ENCODE measurements at regions of chr3 and their contacts with region 1.

Region 1: GRCh38 chr3:111539351-111540331 is 2.4 kb upstream of the CD96 start:
- DNase-seq: peak; percentile 51 to 67 (median 58)
- H3K4me3 ChIP-seq: peak overlapping the region; percentile 46 to 63
- H3K4me3 Mint-ChIP-seq: peak overlapping the region; percentile 65 to 87 (median 84)
- H3K27ac ChIP-seq: peak overlapping the region; percentile 33
- H3K27ac Mint-ChIP-seq: peak overlapping the region in 6 of 7 donors; percentile 51 to 96 (median 86)
- H3K4me1 ChIP-seq: peaks cover 51% of the 10 kb centered on the region
- H3K4me1 Mint-ChIP-seq: peaks cover 8 to 68% (median 41%) of the 10 kb centered on the region in 4 donors
- H3K27me3 ChIP-seq: no peaks in the 10 kb centered on the region
- H3K27me3 Mint-ChIP-seq: no peaks in the 10 kb centered on the region

Region 2: GRCh38 chr3:110314512-110315114 is 1225.0 kb before region 1 on chr3:
- CTCF ChIA-PET with region 1: interaction called, 21 read pairs
- POLR2A ChIA-PET with region 1: no interaction called
- intact Hi-C with region 1: loop called (anchors 1 kb)
- DNase-seq: peak; percentile 55 to 67 (median 63)
- H3K4me3 ChIP-seq: no peak overlapping the region
- H3K4me3 Mint-ChIP-seq: peak overlapping the region in 1 of 8 donors; percentile 0
- H3K27ac ChIP-seq: no peak overlapping the region
- H3K27ac Mint-ChIP-seq: no peak overlapping the region
- H3K4me1 ChIP-seq: no peaks in the 10 kb centered on the region
- H3K4me1 Mint-ChIP-seq: peaks cover 0 to 7% (median 4%) of the 10 kb centered on the region in 4 donors
- H3K27me3 ChIP-seq: no peaks in the 10 kb centered on the region
- H3K27me3 Mint-ChIP-seq: peaks cover 0 to under 1% of the 10 kb centered on the region in 2 donors

Region 3: DNA sequence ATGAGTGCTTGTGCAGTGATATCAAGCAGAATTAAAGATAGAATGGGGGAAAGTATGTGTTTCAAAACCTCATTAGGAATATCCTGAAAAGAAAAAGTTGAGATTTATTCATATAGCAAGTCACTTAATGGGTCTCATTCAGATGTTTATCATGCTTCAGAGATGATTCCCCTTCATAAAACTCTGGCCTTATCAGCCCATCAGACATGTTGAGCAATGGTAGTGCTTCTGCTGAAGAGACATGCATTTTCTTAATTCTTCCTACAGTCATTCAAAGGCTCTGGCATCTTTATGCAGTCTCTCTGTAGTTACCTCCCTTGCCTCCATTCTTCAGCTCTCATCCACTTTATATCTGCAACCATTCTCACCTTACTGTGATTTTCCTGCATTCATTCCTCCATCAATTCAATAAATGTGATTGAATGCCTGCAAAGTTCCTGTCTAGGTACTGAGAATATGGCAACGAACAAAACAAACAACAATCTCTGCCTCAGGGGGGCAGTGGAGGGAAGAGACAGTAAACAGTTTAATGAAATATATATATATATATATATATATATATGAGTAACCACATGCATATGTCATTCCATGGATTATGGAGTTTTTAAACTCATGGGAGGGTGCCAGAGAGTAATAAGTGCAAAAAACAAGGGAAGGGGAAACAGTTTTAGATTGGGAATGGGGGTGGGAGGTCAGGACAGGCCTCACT is 329.5 kb before region 1 on chr3:
- CTCF ChIA-PET with region 1: interaction called, 4 read pairs
- POLR2A ChIA-PET with region 1: no interaction called
- intact Hi-C with region 1: loop called (anchors 5 kb)
- DNase-seq: no peak
- H3K4me3 ChIP-seq: no peak overlapping the region
- H3K4me3 Mint-ChIP-seq: no peak overlapping the region
- H3K27ac ChIP-seq: no peak overlapping the region
- H3K27ac Mint-ChIP-seq: no peak overlapping the region
- H3K4me1 ChIP-seq: no peaks in the 10 kb centered on the region
- H3K4me1 Mint-ChIP-seq: no peaks in the 10 kb centered on the region
- H3K27me3 ChIP-seq: no peaks in the 10 kb centered on the region
- H3K27me3 Mint-ChIP-seq: no peaks in the 10 kb centered on the region

Region 4: DNA sequence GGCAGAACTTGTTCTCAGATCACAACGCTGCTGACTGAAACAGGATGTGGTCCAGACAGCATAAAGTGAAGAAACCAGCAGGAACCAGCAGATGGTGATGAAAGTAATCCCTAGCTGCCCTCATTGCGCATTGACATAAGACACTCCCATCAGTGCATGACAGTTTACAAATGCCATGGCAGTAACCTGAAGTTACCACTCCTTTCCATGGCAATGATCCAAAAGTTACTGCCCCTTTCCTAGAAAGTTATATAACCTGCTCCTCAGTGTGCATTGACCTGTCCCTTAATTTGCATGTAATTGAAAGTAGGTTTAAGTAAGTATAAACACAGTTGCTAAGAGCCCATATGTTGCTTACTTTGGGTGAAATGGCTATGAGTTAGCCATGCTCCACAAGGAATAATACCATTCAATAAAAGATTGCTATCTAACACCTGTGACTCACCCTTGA is 146.7 kb before region 1 on chr3:
- CTCF ChIA-PET with region 1: no interaction called
- POLR2A ChIA-PET with region 1: interaction called, 3 read pairs
- intact Hi-C with region 1: loop called (anchors 2 kb)
- DNase-seq: peak; percentile 59 to 81 (median 65)
- H3K4me3 ChIP-seq: no peak overlapping the region
- H3K4me3 Mint-ChIP-seq: peak overlapping the region in 1 of 8 donors; percentile 24
- H3K27ac ChIP-seq: no peak overlapping the region
- H3K27ac Mint-ChIP-seq: peak overlapping the region; percentile 50 to 92 (median 72)
- H3K4me1 ChIP-seq: peaks cover 14% of the 10 kb centered on the region
- H3K4me1 Mint-ChIP-seq: peaks cover 14 to 25% (median 21%) of the 10 kb centered on the region in 4 donors
- H3K27me3 ChIP-seq: no peaks in the 10 kb centered on the region
- H3K27me3 Mint-ChIP-seq: no peaks in the 10 kb centered on the region

Region 5: DNA sequence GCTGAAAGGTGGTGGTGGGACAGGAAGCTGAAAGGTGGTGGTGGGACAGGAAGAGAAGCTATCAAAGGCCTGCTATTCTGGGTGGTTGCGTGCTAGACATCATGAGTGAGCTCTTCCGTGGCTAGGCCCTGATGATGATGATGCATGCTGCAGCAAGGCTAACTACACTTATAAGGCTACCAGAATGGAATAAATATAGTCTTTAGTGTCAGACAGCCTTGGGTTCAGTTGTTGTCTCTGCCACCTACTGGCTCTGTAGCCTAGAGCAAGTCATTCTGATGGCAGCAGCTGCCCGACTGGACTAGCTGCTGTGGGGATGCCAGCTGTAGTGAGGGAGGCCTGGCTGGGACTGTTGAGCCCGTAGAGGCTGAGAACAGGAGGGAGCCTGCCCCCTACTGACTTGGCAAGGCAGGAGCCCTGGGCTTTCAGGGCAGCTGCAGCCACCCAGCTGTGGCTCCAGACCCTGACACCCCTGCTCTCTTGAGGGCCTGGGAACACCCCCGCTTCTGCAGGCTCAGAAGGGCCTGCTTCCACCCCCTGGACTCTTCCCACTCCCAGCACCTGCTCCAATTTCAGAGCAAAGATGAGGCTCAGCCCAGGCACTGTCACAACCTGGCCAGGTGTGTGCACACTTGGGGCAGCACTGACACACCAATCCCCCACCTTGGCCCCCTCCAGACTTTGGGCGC is 76.9 kb after region 1 on chr3:
- CTCF ChIA-PET with region 1: interaction called, 19 read pairs
- POLR2A ChIA-PET with region 1: interaction called, 58 read pairs
- intact Hi-C with region 1: loop called (anchors 1 kb)
- DNase-seq: peak; percentile 60 to 85 (median 71)
- H3K4me3 ChIP-seq: no peak overlapping the region
- H3K4me3 Mint-ChIP-seq: peak overlapping the region in 7 of 8 donors; percentile 43 to 73 (median 62)
- H3K27ac ChIP-seq: peak overlapping the region; percentile 53
- H3K27ac Mint-ChIP-seq: peak overlapping the region; percentile 89 to 98 (median 92)
- H3K4me1 ChIP-seq: peaks cover 43% of the 10 kb centered on the region
- H3K4me1 Mint-ChIP-seq: peaks cover 41 to 65% (median 50%) of the 10 kb centered on the region in 4 donors
- H3K27me3 ChIP-seq: no peaks in the 10 kb centered on the region
- H3K27me3 Mint-ChIP-seq: no peaks in the 10 kb centered on the region

Measured in CD4-positive, alpha-beta memory T cell (primary cell).